ENCODE measurements at regions of chr2 and their contacts with region 1.

Region 1: GRCh38 chr2:174748948-174749347 is 15.3 kb downstream of the CHRNA1 start:
- DNase-seq: peak; percentile 87 to 91
- H3K4me3 ChIP-seq: no peak overlapping the region
- H3K27ac ChIP-seq: no peak overlapping the region
- H3K4me1 ChIP-seq: peaks cover 8% of the 10 kb centered on the region
- H3K27me3 ChIP-seq: no peaks in the 10 kb centered on the region
- CTCF ChIP-seq: peak; percentile 97

Region 2: GRCh38 chr2:174465327-174465726 is 283.6 kb before region 1 on chr2:
- CTCF ChIA-PET with region 1: no interaction called
- POLR2A ChIA-PET with region 1: no interaction called
- intact Hi-C with region 1: loop called (anchors 2 kb)
- DNase-seq: no peak
- H3K4me3 ChIP-seq: no peak overlapping the region
- H3K27ac ChIP-seq: no peak overlapping the region
- H3K4me1 ChIP-seq: no peaks in the 10 kb centered on the region
- H3K27me3 ChIP-seq: no peaks in the 10 kb centered on the region
- CTCF ChIP-seq: no peak

Region 3: DNA sequence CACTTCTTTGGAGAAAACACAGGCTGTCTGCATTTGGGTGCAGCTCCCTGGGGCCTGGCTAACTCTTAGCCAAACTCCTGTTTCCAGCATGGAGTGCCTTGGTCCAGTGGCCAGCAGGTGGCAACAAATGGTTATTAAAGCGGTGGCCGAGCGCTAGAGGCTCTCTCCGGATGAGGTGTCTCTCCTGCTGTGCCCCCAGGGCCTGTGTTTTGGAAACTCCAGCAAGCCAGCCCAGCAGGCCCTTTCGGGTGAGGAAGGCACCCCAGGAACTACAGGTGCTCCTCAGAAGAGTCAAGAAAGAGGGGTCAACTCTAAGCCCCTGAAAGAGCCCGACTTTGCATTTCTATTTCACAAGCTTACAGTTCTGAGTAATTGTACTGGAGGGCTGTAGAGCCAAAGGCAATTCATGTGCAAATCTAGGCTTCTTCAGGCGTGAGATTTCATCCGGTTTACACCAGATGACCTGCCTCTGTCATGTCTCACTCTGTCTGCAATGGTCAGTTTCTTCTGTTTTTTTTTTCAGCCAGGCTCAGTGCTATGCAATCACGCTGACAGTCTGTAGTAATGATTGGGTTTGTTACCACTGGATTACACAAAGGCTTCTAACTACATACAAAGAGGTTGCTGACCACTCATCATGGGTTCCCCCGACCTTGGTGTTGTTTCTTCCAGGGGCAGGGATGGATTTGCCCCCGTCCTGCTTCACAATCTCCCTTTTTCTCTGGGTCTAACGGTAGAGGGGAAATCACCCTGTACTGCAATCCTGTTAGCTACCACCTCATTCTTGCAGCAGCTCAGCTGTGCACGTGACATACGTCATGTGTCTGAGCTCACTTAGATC is 22.9 kb after region 1 on chr2:
- CTCF ChIA-PET with region 1: interaction called, 26 read pairs
- POLR2A ChIA-PET with region 1: interaction called, 3 read pairs
- intact Hi-C with region 1: loop called (anchors 1 kb)
- DNase-seq: peak; percentile 70 to 82
- H3K4me3 ChIP-seq: no peak overlapping the region
- H3K27ac ChIP-seq: no peak overlapping the region
- H3K4me1 ChIP-seq: 0 out of 2 replicates have a peak, but pooled peaks cover 3% of the 10 kb centered on the region
- H3K27me3 ChIP-seq: no peaks in the 10 kb centered on the region
- CTCF ChIP-seq: peak; percentile 97

Region 4: GRCh38 chr2:175036582-175037018 is 287.7 kb after region 1 on chr2:
- CTCF ChIA-PET with region 1: interaction called, 13 read pairs
- POLR2A ChIA-PET with region 1: no interaction called
- intact Hi-C with region 1: no loop called
- DNase-seq: peak in 1 of 2 experiments; percentile 64
- H3K4me3 ChIP-seq: 0 out of 2 replicates have a peak overlapping the region, but pooled peaks have one; percentile 6
- H3K27ac ChIP-seq: no peak overlapping the region
- H3K4me1 ChIP-seq: no peaks in the 10 kb centered on the region
- H3K27me3 ChIP-seq: no peaks in the 10 kb centered on the region
- CTCF ChIP-seq: peak; percentile 92

Region 5: DNA sequence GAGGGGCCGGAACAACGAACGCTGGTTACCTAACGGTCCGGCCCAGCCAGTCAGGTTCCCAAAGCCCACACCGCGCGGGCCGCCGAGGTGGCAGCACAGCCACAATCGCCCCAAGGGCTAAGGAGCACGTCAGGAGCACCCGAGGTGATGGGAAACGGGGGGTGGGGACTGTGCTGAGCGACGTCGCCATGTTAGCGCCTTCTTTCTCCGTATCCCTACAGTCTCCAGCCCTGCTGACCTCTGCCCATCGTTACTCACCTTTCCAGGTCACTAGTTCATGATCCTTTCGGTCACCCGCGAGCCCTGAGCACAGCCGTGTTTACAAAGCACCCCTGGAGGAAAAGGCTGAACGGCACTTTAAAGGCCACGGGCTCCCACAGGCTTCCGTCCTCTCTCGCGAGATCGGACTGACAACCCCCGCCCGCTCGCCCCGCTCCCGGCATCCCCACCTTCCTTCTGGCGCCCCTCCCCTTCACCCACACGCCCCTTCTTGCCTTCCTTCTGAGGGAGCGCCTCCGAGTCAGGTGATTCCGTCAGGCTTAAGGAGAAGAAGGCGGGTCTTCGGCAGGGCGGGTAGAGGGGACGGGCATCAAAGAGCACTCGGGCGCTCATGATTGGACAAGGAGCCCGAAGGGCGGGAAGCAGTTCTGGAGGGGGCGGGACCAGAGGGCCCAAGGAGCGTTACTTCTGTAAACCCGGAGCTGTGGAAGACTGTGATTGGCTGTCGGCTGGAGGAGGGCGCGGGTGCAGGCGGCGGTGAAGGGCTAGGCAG is 419.0 kb after region 1 on chr2 and contains the start of gene ATF2:
- CTCF ChIA-PET with region 1: no interaction called
- POLR2A ChIA-PET with region 1: no interaction called
- intact Hi-C with region 1: loop called (anchors 10 kb)
- DNase-seq: peak; percentile 100
- H3K4me3 ChIP-seq: peak within 1 kb of the TSS; percentile 91
- H3K27ac ChIP-seq: peak within 1 kb of the TSS; percentile 67
- H3K4me1 ChIP-seq: peaks cover 20% of the 10 kb centered on the region
- H3K27me3 ChIP-seq: no peaks in the 10 kb centered on the region
- CTCF ChIP-seq: no peak
- total RNA-seq, gene ATF2: 80.9 and 94.5 TPM in 2 replicates

Region 6: DNA sequence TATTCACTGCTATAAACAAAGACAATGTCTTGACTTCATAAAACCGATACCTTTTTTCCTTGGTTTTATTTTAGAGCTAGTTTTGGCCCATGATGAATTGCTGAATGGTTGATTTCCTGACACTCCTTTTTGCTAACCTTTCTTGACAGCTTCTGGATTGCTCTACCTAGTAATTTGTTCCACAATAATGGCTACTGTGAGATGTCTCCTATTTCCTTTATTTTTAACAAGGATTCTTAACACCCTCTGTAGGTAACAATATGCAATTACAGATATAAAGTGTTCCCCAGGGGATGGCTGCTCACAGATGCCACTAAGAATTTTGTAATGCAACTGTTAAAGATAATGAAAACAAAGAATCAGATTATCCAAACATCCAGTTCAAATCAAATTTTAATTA is 533.3 kb after region 1 on chr2:
- CTCF ChIA-PET with region 1: no interaction called
- POLR2A ChIA-PET with region 1: no interaction called
- intact Hi-C with region 1: loop called (anchors 5 kb)
- DNase-seq: no peak
- H3K4me3 ChIP-seq: no peak overlapping the region
- H3K27ac ChIP-seq: no peak overlapping the region
- H3K4me1 ChIP-seq: no peaks in the 10 kb centered on the region
- H3K27me3 ChIP-seq: peaks cover 27% of the 10 kb centered on the region; the same call in 1 of the 2 replicates
- CTCF ChIP-seq: peak; percentile 81

Measured in PC-9 (cell line).